Panc1 (cell line): ENCODE measurements at regions of chr9 and their contacts with region 1.

Region 1: GRCh38 chr9:121273064-121273775 is 5.3 kb downstream of the GSN start:
- DNase-seq: no peak
- ATAC-seq: no peak
- H3K4me3 ChIP-seq: no peak overlapping the region
- H3K27ac ChIP-seq: peak overlapping the region; percentile 40
- H3K4me1 ChIP-seq: peaks cover 79% of the 10 kb centered on the region
- H3K27me3 ChIP-seq: no peaks in the 10 kb centered on the region
- CTCF ChIP-seq: no peak

Region 2: GRCh38 chr9:120892748-120893610 is 380.2 kb before region 1 on chr9:
- CTCF ChIA-PET with region 1: no interaction called
- POLR2A ChIA-PET with region 1: no interaction called
- in situ Hi-C with region 1: no loop called
- intact Hi-C with region 1: no loop called
- DNase-seq: no peak
- ATAC-seq: no peak
- H3K4me3 ChIP-seq: no peak overlapping the region
- H3K27ac ChIP-seq: no peak overlapping the region
- H3K4me1 ChIP-seq: no peaks in the 10 kb centered on the region; the same call in 1 of the 2 replicates
- H3K27me3 ChIP-seq: no peaks in the 10 kb centered on the region
- CTCF ChIP-seq: no peak

Region 3: DNA sequence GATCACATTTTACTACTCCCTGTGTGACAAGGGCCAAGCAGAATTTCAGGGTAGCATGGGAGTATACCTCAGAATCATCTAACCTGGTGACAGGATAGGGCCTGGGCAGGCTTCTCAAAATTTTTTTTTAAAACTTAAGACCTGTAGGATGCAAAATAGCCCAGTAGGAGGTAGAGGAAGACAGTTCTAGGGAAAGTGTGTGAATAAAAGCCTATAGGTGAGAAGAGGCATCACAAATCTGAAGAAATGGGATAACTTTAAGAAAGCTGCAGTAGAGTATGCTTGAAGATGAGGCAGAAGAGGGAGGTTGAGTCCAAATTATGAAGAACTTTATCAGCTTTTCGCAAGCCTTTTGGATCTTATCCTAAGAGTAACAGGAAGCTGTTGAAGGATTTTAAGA is 166.2 kb before region 1 on chr9:
- CTCF ChIA-PET with region 1: no interaction called
- POLR2A ChIA-PET with region 1: no interaction called
- in situ Hi-C with region 1: no loop called
- intact Hi-C with region 1: no loop called
- DNase-seq: no peak
- ATAC-seq: no peak
- H3K4me3 ChIP-seq: no peak overlapping the region
- H3K27ac ChIP-seq: no peak overlapping the region
- H3K4me1 ChIP-seq: no peaks in the 10 kb centered on the region
- H3K27me3 ChIP-seq: no peaks in the 10 kb centered on the region
- CTCF ChIP-seq: no peak; the same call in 1 of the 2 replicates

Region 4: DNA sequence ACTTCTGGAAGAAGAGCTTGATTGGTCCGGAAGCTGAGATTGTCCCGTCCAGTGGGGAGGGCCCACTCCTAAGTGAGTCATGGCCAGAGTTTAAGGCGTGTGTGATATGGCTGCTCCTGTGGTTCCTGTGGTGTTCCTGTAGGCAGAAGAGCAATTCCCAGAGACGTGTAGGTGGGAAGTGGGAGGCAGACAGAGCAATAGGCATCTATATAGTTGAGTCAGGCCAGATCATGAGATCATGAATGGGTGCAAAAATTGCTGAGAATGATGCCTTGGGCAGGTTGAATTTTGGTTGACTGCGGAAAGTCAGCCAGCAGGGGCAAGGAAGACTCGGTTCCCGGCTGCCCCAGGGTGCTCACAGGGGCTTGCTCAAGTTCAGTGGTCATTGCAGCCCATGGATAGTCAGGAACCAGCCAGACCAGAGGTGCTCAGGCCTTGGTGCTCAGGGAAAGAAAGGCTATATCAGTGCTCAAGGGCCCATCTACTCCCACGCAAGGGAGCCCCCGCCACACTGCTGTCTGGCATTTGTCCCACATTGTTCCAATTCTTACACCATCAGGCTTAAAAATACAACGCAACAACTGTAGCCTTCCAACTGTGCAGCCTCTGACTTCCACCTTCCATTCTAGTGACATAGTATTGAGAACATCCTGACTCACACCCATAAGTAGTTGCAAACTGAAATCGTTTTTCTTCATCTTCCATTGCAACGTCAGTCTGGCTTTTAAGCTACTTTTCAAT is 26.2 kb before region 1 on chr9:
- CTCF ChIA-PET with region 1: no interaction called
- POLR2A ChIA-PET with region 1: interaction called, 12 read pairs
- in situ Hi-C with region 1: no loop called
- intact Hi-C with region 1: no loop called
- DNase-seq: no peak
- ATAC-seq: no peak
- H3K4me3 ChIP-seq: no peak overlapping the region
- H3K27ac ChIP-seq: no peak overlapping the region
- H3K4me1 ChIP-seq: no peaks in the 10 kb centered on the region
- H3K27me3 ChIP-seq: no peaks in the 10 kb centered on the region
- CTCF ChIP-seq: no peak